Activated CD4-positive, alpha-beta T cell treated with anti-CD3 and anti-CD28 coated beads, Interleukin-2, amount 10 ng/mL, durations not matched to agents 24 days and 14 days (primary cell): ENCODE measurements at regions of chr5 and their contacts with region 1.

Region 1: GRCh38 chr5:119031905-119032304 is 39.0 kb upstream of the DMXL1 start:
- DNase-seq: no peak
- H3K4me3 Mint-ChIP-seq: peak overlapping the region; percentile 26
- H3K27ac Mint-ChIP-seq: peak overlapping the region; percentile 7
- H3K4me1 Mint-ChIP-seq: peaks cover 23% of the 10 kb centered on the region
- H3K27me3 Mint-ChIP-seq: no peaks in the 10 kb centered on the region

Region 2: DNA sequence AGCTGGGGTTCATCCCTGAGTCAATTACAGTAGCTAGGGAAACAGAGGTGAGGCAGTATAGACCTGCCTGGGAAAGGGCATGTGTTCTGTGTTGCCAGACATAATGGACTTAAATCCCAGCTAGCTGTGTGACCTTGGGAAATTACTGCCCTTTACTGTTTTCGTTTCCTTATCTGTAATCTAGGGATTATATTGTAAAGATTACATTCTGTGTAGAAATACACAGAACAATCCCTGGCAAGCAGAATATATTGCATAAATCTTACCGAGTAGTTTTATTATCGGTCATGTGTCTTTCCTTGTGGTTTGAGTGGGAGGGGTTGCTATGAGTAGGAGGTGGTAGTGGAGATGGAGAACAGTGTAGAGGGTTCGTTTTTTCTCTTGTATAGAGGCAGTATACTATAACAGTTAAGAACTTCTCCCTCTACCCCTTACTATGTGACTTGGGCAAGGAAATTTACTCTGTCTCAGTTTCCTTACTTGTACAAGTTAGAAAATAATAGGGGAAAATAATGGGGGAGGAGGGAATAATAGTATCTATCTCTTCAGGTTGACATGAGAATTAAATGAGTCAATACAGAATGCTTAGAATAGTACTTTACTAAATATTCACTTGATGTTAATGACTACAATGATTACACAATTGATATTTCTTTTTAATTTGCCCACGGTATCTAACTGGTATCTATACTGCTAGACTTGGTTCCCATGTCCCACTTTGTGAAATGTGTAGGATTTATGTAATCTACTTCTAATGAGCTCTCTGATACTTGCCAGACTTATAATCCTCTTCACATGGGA is 31.9 kb after region 1 on chr5:
- intact Hi-C with region 1: loop called (anchors 1 kb)
- DNase-seq: no peak
- H3K4me3 Mint-ChIP-seq: peak overlapping the region; percentile 4
- H3K27ac Mint-ChIP-seq: peak overlapping the region; percentile 62
- H3K4me1 Mint-ChIP-seq: peaks cover 13% of the 10 kb centered on the region
- H3K27me3 Mint-ChIP-seq: peaks cover 2% of the 10 kb centered on the region

Region 3: GRCh38 chr5:119070828-119071572 is 39.1 kb after region 1 on chr5 and contains the start of gene DMXL1:
- intact Hi-C with region 1: loop called (anchors 1 kb)
- DNase-seq: peak; percentile 99
- H3K4me3 Mint-ChIP-seq: peak within 1 kb of the TSS; percentile 94
- H3K27ac Mint-ChIP-seq: peak within 1 kb of the TSS; percentile 95
- H3K4me1 Mint-ChIP-seq: peaks cover 30% of the 10 kb centered on the region
- H3K27me3 Mint-ChIP-seq: no peaks in the 10 kb centered on the region
- total RNA-seq, gene DMXL1: 22.4 and 25.6 TPM in 2 replicates

Region 4: DNA sequence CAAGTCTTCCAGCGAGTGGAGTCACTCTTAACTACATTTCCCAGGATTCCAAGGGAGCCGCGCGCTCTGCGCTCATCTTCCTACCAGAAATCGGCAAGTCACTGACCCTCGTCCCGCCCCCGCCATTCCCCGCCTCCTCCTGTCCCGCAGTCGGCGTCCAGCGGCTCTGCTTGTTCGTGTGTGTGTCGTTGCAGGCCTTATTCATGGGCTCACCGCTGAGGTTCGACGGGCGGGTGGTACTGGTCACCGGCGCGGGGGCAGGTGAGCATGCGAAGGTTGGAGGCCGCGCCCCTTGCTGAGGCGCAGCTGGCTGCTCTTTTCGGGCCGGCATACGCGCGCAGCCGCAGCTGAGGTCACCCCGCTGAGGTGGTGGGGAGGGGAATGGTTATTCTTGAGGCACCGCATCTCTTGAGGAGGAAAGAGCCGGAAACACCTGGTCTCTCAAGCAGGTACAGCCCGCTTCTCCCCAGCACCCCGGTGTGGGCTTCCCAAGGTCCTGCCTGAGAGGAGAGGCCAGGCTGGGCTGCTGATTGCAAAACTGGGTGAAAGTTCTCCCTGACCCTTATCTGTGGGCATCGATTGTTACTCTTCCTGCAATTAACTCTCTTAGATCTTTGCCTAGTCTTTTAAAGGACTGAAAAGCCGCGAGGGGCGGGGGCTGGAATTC is 420.6 kb after region 1 on chr5 and contains the start of gene HSD17B4:
- intact Hi-C with region 1: loop called (anchors 1 kb)
- DNase-seq: peak; percentile 93
- H3K4me3 Mint-ChIP-seq: peak within 1 kb of the TSS; percentile 95
- H3K27ac Mint-ChIP-seq: peak within 1 kb of the TSS; percentile 85
- H3K4me1 Mint-ChIP-seq: peaks cover 15% of the 10 kb centered on the region
- H3K27me3 Mint-ChIP-seq: peaks cover 13% of the 10 kb centered on the region
- total RNA-seq, gene HSD17B4: 52.5 and 70.4 TPM in 2 replicates